CD4-positive, alpha-beta memory T cell (primary cell): ENCODE measurements at regions of chr22 and their contacts with region 1.

Region 1: GRCh38 chr22:38569972-38570778 is at the start of gene DMC1:
- DNase-seq: peak; percentile 87 to 96 (median 90)
- H3K4me3 ChIP-seq: peak within 1 kb of the TSS; percentile 66 to 85
- H3K4me3 Mint-ChIP-seq: peak within 1 kb of the TSS; percentile 88 to 97 (median 92)
- H3K27ac ChIP-seq: peak within 1 kb of the TSS; percentile 76
- H3K27ac Mint-ChIP-seq: peak within 1 kb of the TSS; percentile 88 to 97 (median 96)
- H3K4me1 ChIP-seq: peaks cover 17% of the 10 kb centered on the region
- H3K4me1 Mint-ChIP-seq: peaks cover 12 to 24% (median 17%) of the 10 kb centered on the region in 4 donors
- H3K27me3 ChIP-seq: no peaks in the 10 kb centered on the region
- H3K27me3 Mint-ChIP-seq: no peaks in the 10 kb centered on the region
- total RNA-seq, gene DMC1: 0.29 to 1.1 TPM

Region 2: GRCh38 chr22:38298312-38299000 is 271.7 kb before region 1 on chr22:
- CTCF ChIA-PET with region 1: interaction called, 4 read pairs
- POLR2A ChIA-PET with region 1: no interaction called
- intact Hi-C with region 1: loop called (anchors 5 kb)
- DNase-seq: peak; percentile 24 to 49 (median 33)
- H3K4me3 ChIP-seq: no peak overlapping the region
- H3K4me3 Mint-ChIP-seq: no peak overlapping the region
- H3K27ac ChIP-seq: no peak overlapping the region
- H3K27ac Mint-ChIP-seq: peak overlapping the region in 1 of 7 donors; percentile 30
- H3K4me1 ChIP-seq: no peaks in the 10 kb centered on the region
- H3K4me1 Mint-ChIP-seq: no peaks in the 10 kb centered on the region
- H3K27me3 ChIP-seq: no peaks in the 10 kb centered on the region
- H3K27me3 Mint-ChIP-seq: no peaks in the 10 kb centered on the region

Region 3: GRCh38 chr22:38485783-38486182 is 84.4 kb before region 1 on chr22:
- CTCF ChIA-PET with region 1: interaction called, 3 read pairs
- POLR2A ChIA-PET with region 1: no interaction called
- intact Hi-C with region 1: loop called (anchors 5 kb)
- DNase-seq: no peak
- H3K4me3 ChIP-seq: no peak overlapping the region
- H3K4me3 Mint-ChIP-seq: no peak overlapping the region
- H3K27ac ChIP-seq: no peak overlapping the region
- H3K27ac Mint-ChIP-seq: peak overlapping the region in 3 of 7 donors; percentile 36 to 77 (median 60)
- H3K4me1 ChIP-seq: peaks cover 11% of the 10 kb centered on the region
- H3K4me1 Mint-ChIP-seq: peaks cover 13 to 53% (median 29%) of the 10 kb centered on the region in 4 donors
- H3K27me3 ChIP-seq: no peaks in the 10 kb centered on the region
- H3K27me3 Mint-ChIP-seq: no peaks in the 10 kb centered on the region

Region 4: GRCh38 chr22:38531251-38531938 is 38.8 kb before region 1 on chr22:
- CTCF ChIA-PET with region 1: no interaction called
- POLR2A ChIA-PET with region 1: interaction called, 3 read pairs
- intact Hi-C with region 1: loop called (anchors 5 kb)
- DNase-seq: peak in 1 of 5 donors; percentile 3
- H3K4me3 ChIP-seq: no peak overlapping the region
- H3K4me3 Mint-ChIP-seq: peak overlapping the region in 6 of 8 donors; percentile 9 to 75 (median 51)
- H3K27ac ChIP-seq: no peak overlapping the region
- H3K27ac Mint-ChIP-seq: peak overlapping the region; percentile 5 to 92 (median 79)
- H3K4me1 ChIP-seq: peaks cover 15% of the 10 kb centered on the region
- H3K4me1 Mint-ChIP-seq: peaks cover 5 to 7% (median 6%) of the 10 kb centered on the region in 4 donors
- H3K27me3 ChIP-seq: no peaks in the 10 kb centered on the region
- H3K27me3 Mint-ChIP-seq: no peaks in the 10 kb centered on the region